SK-N-SH (cell line): ENCODE measurements at regions of chr19 and their contacts with region 1.

Region 1: DNA sequence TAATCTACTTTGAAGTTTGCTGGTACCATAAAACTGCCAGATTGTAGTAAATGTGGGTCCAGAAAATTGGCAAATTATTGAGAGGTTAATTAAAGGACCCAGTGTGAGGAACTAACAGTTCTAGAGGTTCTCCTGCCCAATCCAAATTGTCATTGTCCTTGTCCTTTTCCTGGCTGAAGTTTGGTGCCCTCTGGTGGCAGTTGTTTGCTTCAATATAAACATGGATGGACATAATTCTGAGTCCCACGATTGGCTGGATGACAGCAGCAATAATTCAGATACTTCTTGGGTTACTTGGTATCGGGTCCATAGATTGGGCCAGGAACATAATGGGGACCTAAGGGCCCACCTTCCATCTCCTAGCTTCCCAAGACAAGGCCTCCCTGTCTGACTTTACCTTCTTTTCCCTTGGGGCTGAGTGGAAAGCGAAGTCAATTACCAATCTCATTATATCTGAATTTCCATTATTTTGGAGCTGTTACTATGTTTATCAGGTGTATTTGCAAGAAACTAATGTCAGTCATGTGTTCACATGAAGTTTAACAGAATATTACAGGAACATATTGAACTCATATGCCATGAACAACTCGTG is 33.8 kb upstream of the GARRE1 start:
- DNase-seq: peak; percentile 67
- H3K4me3 ChIP-seq: no peak overlapping the region
- H3K27ac ChIP-seq: no peak overlapping the region
- H3K4me1 ChIP-seq: peaks cover 6 to 30% of the 10 kb centered on the region in 2 experiments
- H3K27me3 ChIP-seq: no peaks in the 10 kb centered on the region
- CTCF ChIP-seq: peak; percentile 87
- EP300 ChIP-seq: no peak
- RAD21 ChIP-seq: peak; percentile 68

Region 2: DNA sequence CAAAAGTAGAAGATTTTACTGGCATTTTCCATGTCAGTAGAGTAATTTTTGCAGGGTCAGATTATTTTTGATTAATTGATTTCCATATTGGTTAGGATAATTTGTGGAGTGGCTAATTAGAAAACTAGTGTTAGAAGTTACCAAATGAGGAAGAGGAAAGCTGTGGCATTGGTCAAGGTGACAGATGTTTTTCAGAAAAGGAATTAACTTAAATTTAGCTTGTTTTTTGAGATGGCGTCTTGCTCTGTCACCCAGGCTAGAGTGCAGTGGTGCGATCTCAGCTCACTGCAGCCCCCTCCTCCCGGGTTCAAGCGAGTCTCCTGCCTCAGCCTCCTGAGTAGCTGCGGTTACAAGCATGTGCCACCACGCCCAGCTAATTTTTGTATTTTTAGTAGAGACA is 19.4 kb before region 1 on chr19:
- CTCF ChIA-PET with region 1: interaction called, 12 read pairs
- POLR2A ChIA-PET with region 1: no interaction called
- DNase-seq: no peak
- H3K4me3 ChIP-seq: no peak overlapping the region
- H3K27ac ChIP-seq: no peak overlapping the region
- H3K4me1 ChIP-seq: 0 out of 4 replicates have a peak, but pooled peaks cover 0 to 5% of the 10 kb centered on the region in 2 experiments
- H3K27me3 ChIP-seq: no peaks in the 10 kb centered on the region
- CTCF ChIP-seq: no peak
- EP300 ChIP-seq: no peak
- RAD21 ChIP-seq: no peak

Region 3: GRCh38 chr19:34232566-34233481 is 12.3 kb after region 1 on chr19:
- CTCF ChIA-PET with region 1: interaction called, 17 read pairs
- POLR2A ChIA-PET with region 1: no interaction called
- DNase-seq: no peak
- H3K4me3 ChIP-seq: peak overlapping the region in 1 of 2 experiments; percentile 40; a peak in 2 of 4 replicates
- H3K27ac ChIP-seq: peak overlapping the region; percentile 34 to 88; a peak in 3 of 4 replicates
- H3K4me1 ChIP-seq: peaks cover 4 to 16% of the 10 kb centered on the region in 2 experiments; a peak in 2 of 4 replicates
- H3K27me3 ChIP-seq: no peaks in the 10 kb centered on the region
- CTCF ChIP-seq: no peak
- EP300 ChIP-seq: peak in 1 of 2 experiments; percentile 45; a peak in 2 of 4 replicates
- RAD21 ChIP-seq: no peak

Region 4: GRCh38 chr19:34288381-34288780 is 67.8 kb after region 1 on chr19:
- CTCF ChIA-PET with region 1: no interaction called
- POLR2A ChIA-PET with region 1: no interaction called
- DNase-seq: no peak
- H3K4me3 ChIP-seq: no peak overlapping the region
- H3K27ac ChIP-seq: no peak overlapping the region
- H3K4me1 ChIP-seq: no peaks in the 10 kb centered on the region
- H3K27me3 ChIP-seq: no peaks in the 10 kb centered on the region
- CTCF ChIP-seq: no peak
- EP300 ChIP-seq: no peak
- RAD21 ChIP-seq: no peak